Sciatic nerve (tissue), 2 donors: ENCODE measurements at regions of chr1 and their contacts with region 1.

Region 1: GRCh38 chr1:229268505-229268904 is 2.4 kb upstream of the RAB4A start:
- DNase-seq: no peak
- ATAC-seq: no peak

Region 2: GRCh38 chr1:229341774-229342655 is 73.5 kb after region 1 on chr1:
- intact Hi-C with region 1: loop called (anchors 10 kb)
- DNase-seq: peak; percentile 92
- ATAC-seq: peak; percentile 95

Region 3: GRCh38 chr1:229378586-229379367 is 110.3 kb after region 1 on chr1:
- intact Hi-C with region 1: no loop called
- DNase-seq: no peak
- ATAC-seq: no peak

Region 4: GRCh38 chr1:229514578-229515275 is 246.2 kb after region 1 on chr1:
- intact Hi-C with region 1: loop called (anchors 10 kb)
- DNase-seq: peak; percentile 74
- ATAC-seq: peak; percentile 94